ENCODE measurements at regions of chr17 and their contacts with region 1.

Region 1: DNA sequence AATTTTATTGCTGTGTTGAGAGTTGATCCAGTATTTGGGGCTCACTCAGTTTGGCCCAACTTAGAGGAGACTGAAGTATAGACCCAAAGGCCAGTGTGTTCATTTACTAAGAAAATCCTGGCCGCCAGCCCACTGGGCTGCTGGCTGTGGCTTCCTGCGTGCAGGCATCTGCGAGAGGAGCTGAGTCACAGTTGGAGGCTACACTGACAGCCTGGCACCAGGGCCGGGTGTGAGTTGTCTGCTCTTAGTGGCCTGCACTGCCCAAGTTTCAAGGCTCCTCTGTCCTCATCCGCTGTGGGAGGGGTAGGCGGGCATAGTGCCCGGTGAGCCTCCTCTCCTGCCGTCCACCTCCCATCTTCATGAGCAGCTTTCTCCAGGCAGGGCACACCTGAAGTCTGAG is 54.2 kb downstream of the PLD6 start:
- DNase-seq: peak; percentile 92

Region 2: GRCh38 chr17:17001874-17002520 is 150.0 kb before region 1 on chr17:
- intact Hi-C with region 1: no loop called
- DNase-seq: peak; percentile 87

Region 3: DNA sequence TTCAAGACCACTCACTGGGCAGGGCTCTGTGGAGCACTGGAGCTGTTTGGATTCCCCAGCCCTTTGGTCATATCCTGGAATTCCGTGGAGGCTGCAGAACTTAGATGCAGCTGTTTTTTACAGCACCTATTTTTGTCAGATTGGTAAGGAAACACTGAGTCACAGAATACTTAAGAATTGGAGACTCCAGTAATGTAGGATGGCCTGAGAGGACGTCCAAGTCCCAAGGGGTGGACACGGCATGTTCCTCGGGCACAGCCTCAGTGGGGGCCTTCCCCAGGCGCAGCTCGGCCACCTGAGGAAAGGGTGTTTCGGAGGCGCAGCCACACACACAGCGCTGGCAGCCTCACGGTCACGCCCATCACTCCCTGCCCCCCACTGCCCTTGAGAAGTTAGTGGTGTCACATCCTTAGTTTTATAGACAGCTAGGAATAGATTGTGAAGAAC is 39.4 kb after region 1 on chr17:
- intact Hi-C with region 1: loop called (anchors 5 kb)
- DNase-seq: no peak

Region 4: DNA sequence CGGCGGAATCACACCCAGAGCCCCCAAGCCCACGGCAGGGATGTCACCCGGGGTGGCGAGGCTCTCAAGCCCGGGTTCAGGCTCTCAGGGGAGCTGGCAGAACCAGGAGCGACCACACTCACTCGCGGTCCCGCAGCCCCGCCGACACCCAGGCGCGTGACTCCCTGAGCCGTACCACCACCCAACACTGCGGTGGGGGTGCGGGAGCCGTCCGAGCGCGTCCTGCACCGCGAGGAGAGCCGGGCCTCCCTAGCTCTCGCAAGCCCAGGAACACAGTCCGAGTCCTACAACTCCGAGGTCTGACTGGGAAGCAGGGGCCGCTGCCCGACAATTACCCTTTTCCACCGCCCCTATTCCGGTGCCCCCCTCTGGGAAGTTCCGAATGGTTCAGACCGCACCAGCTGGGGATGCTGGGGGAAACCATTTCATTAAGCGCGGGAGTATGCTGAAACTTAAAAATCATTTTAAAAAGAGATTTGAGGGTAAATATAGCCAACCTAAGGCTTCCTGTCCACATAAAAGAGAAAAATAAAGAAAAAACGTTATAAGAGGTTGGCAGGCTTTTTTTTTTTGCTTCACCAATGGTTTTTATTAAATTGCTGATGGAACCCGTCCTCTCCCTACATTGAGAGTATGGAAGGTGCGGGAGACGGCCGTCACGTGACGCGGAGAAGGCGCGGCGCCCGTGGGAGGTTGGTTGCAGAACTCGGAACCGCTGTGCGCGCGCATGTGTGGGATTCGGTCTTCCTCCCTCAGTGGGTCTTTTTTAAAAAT is 85.3 kb after region 1 on chr17 and contains the start of gene FLCN:
- intact Hi-C with region 1: loop called (anchors 5 kb)
- DNase-seq: peak; percentile 97
- total RNA-seq, gene FLCN: 36.1 TPM

Region 5: DNA sequence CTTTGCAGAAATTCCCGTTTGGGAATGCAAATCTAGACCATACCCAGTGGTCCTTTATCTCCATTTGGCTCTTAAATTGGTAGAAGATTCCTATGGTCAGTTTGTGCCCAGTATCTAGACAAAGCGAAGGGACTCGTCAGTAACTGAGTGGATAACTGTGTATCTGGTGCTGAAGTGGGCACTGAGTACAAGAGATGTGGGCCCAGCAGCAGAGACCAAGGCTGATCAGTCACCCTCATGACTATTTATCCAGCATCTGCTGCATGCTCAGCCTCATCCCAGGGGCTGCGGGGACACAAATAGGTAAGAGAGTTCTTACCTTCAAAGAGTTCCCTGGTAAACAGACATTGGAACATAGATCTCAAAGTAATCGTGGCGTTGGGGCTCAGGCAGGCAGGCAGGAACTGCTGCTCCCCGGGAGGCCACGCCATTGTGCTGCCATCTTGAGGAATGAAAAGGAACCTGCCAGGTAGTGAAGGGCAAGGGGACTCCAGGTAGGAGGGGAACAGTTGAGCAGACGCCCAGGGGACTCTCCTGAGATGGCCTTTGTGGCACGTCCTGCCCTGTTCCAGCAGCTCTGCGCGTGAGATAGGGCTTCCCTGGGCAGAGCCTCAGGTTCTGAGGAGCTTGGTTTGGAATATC is 161.5 kb after region 1 on chr17:
- intact Hi-C with region 1: no loop called
- DNase-seq: peak; percentile 77